HepG2 (cell line): ENCODE measurements at regions of chr14 and their contacts with region 1.

Region 1: DNA sequence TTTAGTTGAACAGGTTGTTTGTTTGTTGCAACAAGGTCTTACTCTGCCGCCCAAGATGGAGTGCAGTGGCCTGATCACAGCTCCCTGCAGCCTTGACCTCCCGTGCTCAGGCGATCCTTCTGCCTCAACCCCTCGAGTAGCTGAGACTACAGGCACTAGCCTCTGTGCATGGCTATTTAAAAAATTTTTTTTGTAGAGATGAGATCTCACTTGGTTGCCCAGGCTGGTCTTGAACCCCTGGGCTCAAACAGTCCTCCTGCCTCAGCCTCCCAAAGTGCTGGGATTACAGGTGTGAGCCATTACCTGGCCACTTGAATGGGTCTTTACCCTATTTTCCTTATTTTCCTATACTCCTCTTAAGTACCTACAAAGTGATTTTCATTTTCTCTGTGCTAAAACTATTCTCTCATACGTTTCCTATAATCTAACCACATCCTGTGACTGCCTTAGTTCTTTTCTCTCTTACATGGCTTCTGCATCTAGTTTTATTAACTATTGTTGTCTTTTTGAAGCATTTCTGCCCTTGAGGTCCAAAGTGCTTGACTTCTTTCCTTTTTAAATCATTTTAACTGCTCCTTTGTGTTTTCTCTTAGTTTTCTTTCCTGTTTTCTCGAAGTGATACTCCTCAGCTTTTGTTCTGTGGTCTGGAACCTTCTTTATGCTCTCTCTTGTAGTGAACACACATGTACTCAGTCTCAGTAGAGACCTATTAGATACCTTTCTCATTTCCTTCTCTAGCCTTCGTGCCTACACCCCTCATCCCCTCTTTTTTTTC is 14.1 kb downstream of the GPX2 start:
- DNase-seq: no peak
- ATAC-seq: no peak
- H3K4me3 ChIP-seq: no peak overlapping the region
- H3K27ac ChIP-seq: no peak overlapping the region
- H3K4me1 ChIP-seq: peaks cover 33% of the 10 kb centered on the region
- H3K27me3 ChIP-seq: no peaks in the 10 kb centered on the region
- CTCF ChIP-seq: no peak
- EP300 ChIP-seq: no peak
- POLR2A ChIP-seq: no peak
- RAD21 ChIP-seq: no peak

Region 2: GRCh38 chr14:64914237-64914971 is 14.0 kb before region 1 on chr14 and contains the start of gene CHURC1:
- CTCF ChIA-PET with region 1: no interaction called
- POLR2A ChIA-PET with region 1: interaction called, 14 read pairs
- in situ Hi-C with region 1: no loop called
- intact Hi-C with region 1: no loop called
- DNase-seq: peak; percentile 95
- ATAC-seq: peak; percentile 98
- H3K4me3 ChIP-seq: peak within 1 kb of the TSS; percentile 86 to 97 (median 90)
- H3K27ac ChIP-seq: peak within 1 kb of the TSS; percentile 78
- H3K4me1 ChIP-seq: peaks cover 34% of the 10 kb centered on the region
- H3K27me3 ChIP-seq: no peaks in the 10 kb centered on the region; a peak in 1 of 5 replicates
- CTCF ChIP-seq: 0 out of 2 replicates have a peak, but pooled peaks have one; percentile 4
- EP300 ChIP-seq: no peak
- POLR2A ChIP-seq: peak; percentile 93 to 95
- RAD21 ChIP-seq: peak; percentile 36; the same call in 1 of the 2 replicates
- total RNA-seq, gene CHURC1: 72.1 and 74.4 TPM in 2 replicates

Region 3: DNA sequence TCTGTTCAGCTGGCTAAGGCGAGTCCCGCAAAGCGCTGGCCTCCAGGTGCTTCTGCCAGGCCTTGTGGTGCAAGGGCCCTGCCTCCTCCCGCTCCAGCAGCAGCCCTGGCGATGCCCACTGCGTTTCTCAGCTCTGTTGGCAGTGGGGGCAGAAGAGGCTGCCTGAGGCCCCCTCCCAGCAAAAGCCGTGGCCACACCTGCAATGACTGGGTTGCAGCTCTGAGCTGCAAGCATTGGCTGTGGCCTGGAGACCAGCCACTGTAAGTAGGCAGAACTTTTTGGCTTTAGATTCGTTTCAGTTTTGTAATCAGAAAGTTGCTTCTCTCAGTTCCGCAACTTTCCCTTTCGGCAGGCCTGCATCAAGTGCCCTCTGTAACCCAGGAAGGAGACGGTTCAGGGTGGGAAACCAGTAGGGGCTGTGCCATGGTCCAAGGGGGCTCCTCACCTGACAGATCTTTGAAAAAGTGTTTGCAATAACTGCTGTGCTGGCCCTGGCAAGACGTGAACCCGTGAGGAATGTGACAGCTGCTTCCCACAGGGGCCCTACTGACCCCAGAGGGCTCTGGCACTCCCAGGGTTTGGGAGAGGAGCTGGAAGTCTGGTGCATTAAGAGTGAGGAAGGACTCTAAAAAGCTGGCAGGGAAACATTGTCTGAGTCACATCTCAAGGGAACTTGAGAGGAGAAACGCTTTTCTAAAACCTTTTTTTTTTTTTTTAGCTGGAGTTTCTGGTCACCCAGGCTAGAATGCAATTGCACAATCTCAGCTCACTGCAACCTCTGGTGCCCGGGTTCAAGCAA is 228.3 kb after region 1 on chr14:
- CTCF ChIA-PET with region 1: no interaction called
- POLR2A ChIA-PET with region 1: no interaction called
- in situ Hi-C with region 1: no loop called
- intact Hi-C with region 1: no loop called
- DNase-seq: no peak
- ATAC-seq: peak; percentile 31; the same call in 2 of the 3 replicates
- H3K4me3 ChIP-seq: peak overlapping the region in 1 of 3 experiments; percentile 33; a peak in 1 of 6 replicates
- H3K27ac ChIP-seq: no peak overlapping the region
- H3K4me1 ChIP-seq: no peaks in the 10 kb centered on the region
- H3K27me3 ChIP-seq: peaks cover 0 to 9% of the 10 kb centered on the region in 2 experiments; a peak in 2 of 5 replicates
- CTCF ChIP-seq: no peak
- EP300 ChIP-seq: no peak
- POLR2A ChIP-seq: no peak
- RAD21 ChIP-seq: no peak